ENCODE measurements at regions of chrX and their contacts with region 1.

Region 1: DNA sequence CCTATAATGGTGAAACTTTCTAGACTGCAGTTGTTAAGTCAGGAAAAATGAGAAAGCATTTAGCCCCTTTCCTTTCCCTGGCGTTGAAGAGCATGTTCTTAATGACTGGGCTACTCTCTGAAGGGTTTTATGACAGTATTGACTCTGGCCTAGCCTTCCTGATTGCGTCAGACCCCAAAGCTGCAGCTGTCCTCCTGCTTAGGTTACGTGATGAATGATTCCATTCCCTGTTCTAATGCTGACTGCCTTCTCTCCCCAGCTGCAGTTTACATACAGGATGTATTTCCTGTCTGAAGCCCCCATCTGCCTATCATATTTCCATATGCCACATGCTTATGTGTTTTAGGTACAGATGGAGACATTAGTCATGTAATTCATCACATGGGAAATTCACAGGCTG is 105.8 kb upstream of the EGFL6 start:
- DNase-seq: no peak
- H3K4me3 ChIP-seq: no peak overlapping the region
- H3K27ac ChIP-seq: no peak overlapping the region
- H3K4me1 ChIP-seq: peaks cover 6% of the 10 kb centered on the region
- H3K27me3 ChIP-seq: peaks cover 2% of the 10 kb centered on the region
- CTCF ChIP-seq: no peak

Region 2: GRCh38 chrX:13223868-13224555 is 239.6 kb before region 1 on chrX:
- dilution Hi-C with region 1: loop called (anchors 10 kb)
- DNase-seq: peak; percentile 59
- H3K4me3 ChIP-seq: no peak overlapping the region
- H3K27ac ChIP-seq: peak overlapping the region; percentile 28
- H3K4me1 ChIP-seq: peaks cover 24% of the 10 kb centered on the region
- H3K27me3 ChIP-seq: no peaks in the 10 kb centered on the region
- CTCF ChIP-seq: peak in 1 of 3 experiments; percentile 33

Region 3: DNA sequence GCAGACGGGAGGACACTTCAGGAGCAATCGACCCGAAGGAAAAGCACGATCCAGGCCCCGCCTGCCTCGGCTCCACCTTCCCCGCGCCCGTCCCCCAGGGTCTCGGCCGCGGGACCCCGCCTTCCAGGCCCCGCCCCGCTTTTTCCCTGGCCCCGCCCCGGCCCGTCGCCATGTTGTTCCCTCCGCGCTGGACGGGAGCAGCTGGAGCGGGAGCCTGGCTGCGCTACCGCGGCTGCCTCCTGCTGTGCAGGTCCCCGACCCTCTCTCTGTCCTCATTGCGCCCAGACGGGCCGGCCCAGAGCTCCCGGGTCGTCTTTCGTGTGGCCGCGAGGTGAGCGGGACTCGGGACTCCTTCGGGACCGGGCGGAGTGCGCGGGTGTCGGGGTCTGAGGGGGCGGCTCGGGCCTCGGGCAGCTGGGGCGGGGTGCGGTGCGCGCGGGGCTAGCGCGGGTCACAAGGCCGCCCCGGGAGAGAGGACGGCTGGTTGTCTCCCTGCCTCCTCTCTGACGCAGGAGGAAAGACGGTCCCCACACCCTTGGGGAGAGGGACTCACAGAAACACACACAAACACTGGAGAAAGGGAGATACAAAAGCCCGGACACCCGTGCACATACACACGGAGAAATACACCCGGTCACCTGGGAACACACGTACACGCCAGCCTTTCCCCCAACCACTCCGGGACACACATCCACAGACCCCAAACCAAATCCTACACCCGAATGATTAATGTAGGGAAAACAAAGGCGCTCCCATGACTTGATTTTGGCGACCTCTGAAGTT is 225.5 kb after region 1 on chrX and contains the start of gene RAB9A:
- dilution Hi-C with region 1: no loop called
- DNase-seq: no peak
- H3K4me3 ChIP-seq: peak within 1 kb of the TSS; percentile 72 to 89 (median 77)
- H3K27ac ChIP-seq: peak within 1 kb of the TSS; percentile 97
- H3K4me1 ChIP-seq: peaks cover 41% of the 10 kb centered on the region
- H3K27me3 ChIP-seq: no peaks in the 10 kb centered on the region
- CTCF ChIP-seq: no peak
- polyA plus RNA-seq, gene RAB9A: 40.1 to 46.0 TPM (median 43.5 TPM) in 3 replicates